Dorsolateral prefrontal cortex (tissue), 120 donors: ENCODE measurements at regions of chr4 and their contacts with region 1.

Region 1: GRCh38 chr4:189021831-189022230 is 882.6 kb downstream of the TRIML1 start:
- DNase-seq: no peak
- H3K4me3 ChIP-seq: no peak overlapping the region
- H3K27ac ChIP-seq: no peak overlapping the region
- H3K27me3 ChIP-seq: no peaks in the 10 kb centered on the region
- CTCF ChIP-seq: no peak

Region 2: GRCh38 chr4:188160430-188160794 is 861.4 kb before region 1 on chr4:
- intact Hi-C with region 1: no loop called
- DNase-seq: no peak
- H3K4me3 ChIP-seq: no peak overlapping the region
- H3K27ac ChIP-seq: no peak overlapping the region
- H3K27me3 ChIP-seq: no peaks in the 10 kb centered on the region
- CTCF ChIP-seq: no peak

Region 3: GRCh38 chr4:189279191-189279590 is 257.4 kb after region 1 on chr4:
- intact Hi-C with region 1: loop called in 1 of 2 experiments (anchors 5 kb)
- DNase-seq: no peak
- H3K4me3 ChIP-seq: no peak overlapping the region
- H3K27ac ChIP-seq: no peak overlapping the region
- H3K27me3 ChIP-seq: peaks cover 0 to 4% (median 0%) of the 10 kb centered on the region in 45 donors
- CTCF ChIP-seq: no peak